Activated B cell treated with CpG ODN at 0.5 μM for 24 hours (primary cell): ENCODE measurements at regions of chr2 and their contacts with region 1.

Region 1: DNA sequence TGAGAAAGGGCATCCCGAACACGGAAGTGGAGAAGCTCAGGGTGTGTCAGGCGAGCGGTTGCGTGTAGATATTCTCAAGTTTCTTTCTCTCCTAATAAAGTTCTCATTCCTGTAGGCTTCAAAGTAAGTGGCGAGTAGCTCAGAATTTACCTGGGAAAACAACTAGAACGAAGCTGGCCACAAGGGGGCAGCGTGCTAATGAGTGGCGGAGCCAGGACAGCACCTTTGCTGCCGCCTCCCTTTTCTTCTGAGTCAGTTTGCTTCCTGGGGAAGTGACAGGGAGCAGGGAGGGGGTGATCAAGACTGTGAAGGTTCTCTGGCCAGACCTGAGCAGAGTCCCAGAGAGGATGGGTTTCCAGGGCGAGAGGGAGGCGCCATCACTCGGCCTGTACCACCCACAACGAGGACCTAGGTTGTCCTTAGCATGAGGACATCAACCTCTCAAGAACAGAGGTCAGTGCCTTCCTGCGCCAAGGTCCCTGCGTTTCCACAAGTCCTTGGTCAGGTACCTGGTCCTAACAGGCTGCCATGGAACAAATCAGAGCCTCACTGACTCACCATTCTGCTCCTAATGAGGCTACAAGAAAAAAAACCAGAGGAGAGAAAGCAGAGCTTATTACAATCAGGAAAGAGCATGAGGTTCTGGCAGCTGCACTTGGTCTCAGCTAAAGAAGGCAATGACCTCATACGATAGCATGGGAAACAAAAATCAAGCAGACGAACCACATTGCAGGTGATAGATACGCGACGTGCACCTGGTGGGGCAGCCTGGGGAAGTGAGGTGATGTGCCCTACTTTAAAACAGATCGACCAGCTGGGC is 98.6 kb downstream of the PLB1 start:
- DNase-seq: peak; percentile 62
- ATAC-seq: peak; percentile 79
- H3K4me3 Mint-ChIP-seq: peak overlapping the region; percentile 44
- H3K27ac Mint-ChIP-seq: no peak overlapping the region
- H3K4me1 Mint-ChIP-seq: peaks cover 10% of the 10 kb centered on the region
- H3K27me3 Mint-ChIP-seq: peaks cover 5% of the 10 kb centered on the region
- CTCF ChIP-seq: peak; percentile 66

Region 2: DNA sequence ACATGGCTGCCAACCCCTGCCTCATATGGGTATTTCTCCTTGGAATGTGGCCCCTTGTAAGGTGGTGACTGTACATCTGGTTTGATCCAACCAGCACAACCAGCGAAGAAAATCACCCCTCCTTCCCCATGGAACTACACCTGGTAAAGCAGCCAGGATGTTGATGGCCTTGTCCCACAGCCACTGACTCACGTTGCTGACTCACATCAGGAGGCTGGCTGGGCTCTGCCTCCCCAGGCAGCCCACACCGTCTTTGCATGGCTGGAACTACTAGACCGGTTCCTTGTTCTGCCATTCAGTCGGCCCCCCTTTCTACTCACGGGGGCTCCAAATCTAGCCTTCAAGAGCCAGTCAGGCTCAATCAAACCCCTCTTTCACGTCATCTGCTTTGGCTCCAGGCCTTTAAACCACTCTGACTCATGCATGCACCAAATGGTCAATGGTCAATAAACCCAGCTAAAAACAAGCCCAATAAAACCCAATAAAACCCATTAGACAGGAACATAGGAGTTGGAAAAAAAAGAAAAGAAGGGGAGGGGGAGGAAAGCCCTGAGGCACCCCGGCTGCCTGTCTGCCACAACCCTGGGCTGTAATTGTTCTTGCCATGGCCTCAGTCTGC is 16.2 kb after region 1 on chr2:
- CTCF ChIA-PET with region 1: interaction called, 10 read pairs
- POLR2A ChIA-PET with region 1: no interaction called
- intact Hi-C with region 1: no loop called
- DNase-seq: no peak
- ATAC-seq: no peak
- H3K4me3 Mint-ChIP-seq: no peak overlapping the region
- H3K27ac Mint-ChIP-seq: no peak overlapping the region
- H3K4me1 Mint-ChIP-seq: no peaks in the 10 kb centered on the region
- H3K27me3 Mint-ChIP-seq: no peaks in the 10 kb centered on the region
- CTCF ChIP-seq: no peak

Region 3: GRCh38 chr2:28681158-28681571 is 86.7 kb after region 1 on chr2:
- CTCF ChIA-PET with region 1: interaction called, 4 read pairs
- POLR2A ChIA-PET with region 1: interaction called, 3 read pairs
- intact Hi-C with region 1: loop called (anchors 5 kb)
- DNase-seq: peak; percentile 25
- ATAC-seq: peak; percentile 95
- H3K4me3 Mint-ChIP-seq: no peak overlapping the region
- H3K27ac Mint-ChIP-seq: peak overlapping the region; percentile 5
- H3K4me1 Mint-ChIP-seq: peaks cover 14% of the 10 kb centered on the region
- H3K27me3 Mint-ChIP-seq: no peaks in the 10 kb centered on the region
- CTCF ChIP-seq: no peak

Region 4: DNA sequence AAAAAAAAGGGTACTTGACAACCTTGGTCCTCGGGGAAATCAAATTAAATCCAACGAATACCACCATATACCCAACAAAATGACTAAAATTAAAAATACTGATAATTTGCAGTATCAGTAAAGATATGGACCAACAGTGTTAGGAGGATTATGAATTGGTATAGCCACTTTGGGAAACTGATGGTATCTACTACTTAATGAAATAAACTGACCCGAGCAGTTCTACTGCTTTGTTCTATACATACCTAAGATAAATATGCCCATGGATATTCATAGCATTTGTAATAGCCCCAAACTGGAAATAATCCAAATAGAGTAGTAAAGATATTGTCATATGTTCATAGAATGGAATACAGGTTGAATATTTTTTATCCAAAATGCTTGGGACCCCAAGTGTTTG is 177.8 kb after region 1 on chr2:
- CTCF ChIA-PET with region 1: interaction called, 10 read pairs
- POLR2A ChIA-PET with region 1: interaction called, 3 read pairs
- intact Hi-C with region 1: loop called (anchors 5 kb)
- DNase-seq: no peak
- ATAC-seq: no peak
- H3K4me3 Mint-ChIP-seq: no peak overlapping the region
- H3K27ac Mint-ChIP-seq: no peak overlapping the region
- H3K4me1 Mint-ChIP-seq: peaks cover 77% of the 10 kb centered on the region
- H3K27me3 Mint-ChIP-seq: no peaks in the 10 kb centered on the region
- CTCF ChIP-seq: no peak

Region 5: GRCh38 chr2:28810384-28811285 is 216.1 kb after region 1 on chr2 and contains the start of gene SPDYA:
- CTCF ChIA-PET with region 1: interaction called, 3 read pairs
- POLR2A ChIA-PET with region 1: no interaction called
- intact Hi-C with region 1: loop called (anchors 2 kb)
- DNase-seq: peak; percentile 71
- ATAC-seq: peak; percentile 96
- H3K4me3 Mint-ChIP-seq: peak within 1 kb of the TSS; percentile 84
- H3K27ac Mint-ChIP-seq: peak within 1 kb of the TSS; percentile 50
- H3K4me1 Mint-ChIP-seq: peaks cover 6% of the 10 kb centered on the region
- H3K27me3 Mint-ChIP-seq: no peaks in the 10 kb centered on the region
- CTCF ChIP-seq: no peak
- total RNA-seq, gene SPDYA: 1.6 and 2.1 TPM in 2 replicates

Region 6: GRCh38 chr2:28894470-28895177 is 300.1 kb after region 1 on chr2 and contains the start of gene WDR43:
- CTCF ChIA-PET with region 1: no interaction called
- POLR2A ChIA-PET with region 1: no interaction called
- intact Hi-C with region 1: loop called (anchors 1 kb)
- DNase-seq: peak; percentile 99
- ATAC-seq: peak; percentile 99
- H3K4me3 Mint-ChIP-seq: peak within 1 kb of the TSS; percentile 99
- H3K27ac Mint-ChIP-seq: peak within 1 kb of the TSS; percentile 87
- H3K4me1 Mint-ChIP-seq: peaks cover 44% of the 10 kb centered on the region
- H3K27me3 Mint-ChIP-seq: no peaks in the 10 kb centered on the region
- CTCF ChIP-seq: no peak
- total RNA-seq, gene WDR43: 86.6 and 98.8 TPM in 2 replicates

Region 7: GRCh38 chr2:29000481-29000880 is 406.0 kb after region 1 on chr2:
- CTCF ChIA-PET with region 1: no interaction called
- POLR2A ChIA-PET with region 1: no interaction called
- intact Hi-C with region 1: no loop called
- DNase-seq: peak; percentile 39
- ATAC-seq: peak; percentile 98
- H3K4me3 Mint-ChIP-seq: peak overlapping the region; percentile 1
- H3K27ac Mint-ChIP-seq: peak overlapping the region; percentile 9
- H3K4me1 Mint-ChIP-seq: peaks cover 11% of the 10 kb centered on the region
- H3K27me3 Mint-ChIP-seq: no peaks in the 10 kb centered on the region
- CTCF ChIP-seq: no peak